T-cell (primary cell): ENCODE measurements at regions of chr16 and their contacts with region 1.

Region 1: GRCh38 chr16:75432828-75433731 is at the start of gene CFDP1:
- DNase-seq: peak; percentile 90 to 97 (median 94)
- ATAC-seq: peak; percentile 87 to 92 (median 90)
- H3K4me3 ChIP-seq: peak within 1 kb of the TSS; percentile 98 to 100
- H3K4me3 Mint-ChIP-seq: peak within 1 kb of the TSS; percentile 91 to 96 (median 95)
- H3K27ac ChIP-seq: peak within 1 kb of the TSS; percentile 97
- H3K27ac Mint-ChIP-seq: peak within 1 kb of the TSS; percentile 91 to 93
- H3K4me1 ChIP-seq: peaks cover 10 to 24% of the 10 kb centered on the region in 2 experiments
- H3K4me1 Mint-ChIP-seq: peaks cover 43 to 48% (median 47%) of the 10 kb centered on the region in 3 donors
- H3K27me3 ChIP-seq: no peaks in the 10 kb centered on the region
- H3K27me3 Mint-ChIP-seq: no peaks in the 10 kb centered on the region
- total RNA-seq, gene CFDP1: 30.8 to 36.5 (median 34.2) TPM

Region 2: DNA sequence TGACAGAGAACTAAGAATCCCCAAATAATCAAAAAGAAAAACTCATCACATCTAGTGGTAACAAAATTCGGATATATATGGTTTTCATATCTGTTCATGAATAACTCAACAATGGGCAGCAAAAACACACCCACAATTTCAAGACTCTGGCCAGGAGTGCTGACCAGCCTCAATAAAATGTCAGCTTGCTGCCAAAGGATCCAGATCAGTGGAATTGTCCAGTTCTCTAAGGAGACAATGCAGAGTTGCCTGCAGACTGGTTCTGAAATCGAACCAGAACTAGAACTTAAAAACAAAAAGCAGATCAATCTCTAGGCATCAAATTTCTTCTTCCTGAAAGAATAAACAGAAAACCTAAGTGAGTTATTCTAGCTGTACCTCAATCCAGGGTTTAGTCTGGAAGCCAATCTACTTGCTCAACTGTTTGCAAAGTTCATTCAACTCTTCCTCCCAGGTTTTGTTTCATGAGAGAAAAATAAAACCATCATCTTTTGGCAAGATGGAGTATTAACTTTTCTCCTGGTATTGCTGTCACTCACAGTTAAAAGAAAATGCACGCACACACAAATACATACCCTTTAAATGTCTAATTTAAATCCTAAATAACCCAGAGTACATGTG is 60.7 kb before region 1 on chr16:
- CTCF ChIA-PET with region 1: interaction called in 1 of 2 experiments, 16 read pairs
- POLR2A ChIA-PET with region 1: no interaction called
- DNase-seq: no peak
- ATAC-seq: no peak
- H3K4me3 ChIP-seq: no peak overlapping the region
- H3K4me3 Mint-ChIP-seq: no peak overlapping the region
- H3K27ac ChIP-seq: no peak overlapping the region
- H3K27ac Mint-ChIP-seq: no peak overlapping the region
- H3K4me1 ChIP-seq: no peaks in the 10 kb centered on the region
- H3K4me1 Mint-ChIP-seq: peaks cover 0 to 4% (median under 1%) of the 10 kb centered on the region in 3 donors
- H3K27me3 ChIP-seq: no peaks in the 10 kb centered on the region
- H3K27me3 Mint-ChIP-seq: no peaks in the 10 kb centered on the region

Region 3: DNA sequence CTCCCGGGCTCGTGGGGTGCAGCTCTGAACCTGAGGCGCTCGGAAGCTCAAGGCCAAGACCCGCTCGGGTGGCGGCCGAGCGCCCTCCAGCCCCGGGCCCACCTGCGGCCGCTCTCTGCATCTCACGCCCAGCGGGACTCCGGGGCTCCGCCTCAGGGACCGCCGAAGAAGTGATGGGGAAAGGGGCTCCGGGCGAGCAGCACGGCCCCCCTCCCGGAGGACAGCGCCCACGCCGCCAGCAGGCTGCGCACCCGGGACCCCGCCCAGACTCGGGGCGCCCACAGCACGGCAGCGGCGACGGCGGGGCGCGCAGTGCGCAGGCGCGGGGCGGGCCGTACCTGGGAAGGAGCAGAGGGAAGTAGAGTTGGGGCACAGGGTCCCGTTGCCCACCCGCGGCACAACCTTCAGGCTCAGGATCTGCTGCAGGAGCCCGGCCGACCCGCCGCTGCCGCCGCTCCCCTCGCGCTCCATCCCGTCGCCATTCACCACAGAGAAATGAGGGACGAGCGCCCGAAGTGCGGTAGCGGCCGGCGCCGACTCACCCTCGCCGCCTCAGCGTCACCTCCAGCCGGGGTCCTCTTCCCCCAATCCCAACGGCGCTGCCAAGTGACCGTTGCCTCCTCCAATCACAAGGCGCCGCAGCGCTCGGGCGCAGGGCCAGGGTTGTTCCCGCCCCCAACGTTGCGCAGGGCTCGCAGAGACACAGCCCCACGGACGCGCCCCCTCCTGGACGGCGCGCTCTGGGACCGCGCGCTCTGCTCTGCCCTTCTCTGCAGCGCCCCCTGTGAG is 31.2 kb after region 1 on chr16 and contains the start of gene TMEM170A:
- CTCF ChIA-PET with region 1: interaction called, 8 to 30 read pairs
- POLR2A ChIA-PET with region 1: interaction called, 3 to 5 read pairs
- DNase-seq: peak; percentile 93 to 100 (median 97)
- ATAC-seq: peak; percentile 89 to 92 (median 92)
- H3K4me3 ChIP-seq: peak within 1 kb of the TSS; percentile 91 to 97
- H3K4me3 Mint-ChIP-seq: peak within 1 kb of the TSS; percentile 82 to 93 (median 85)
- H3K27ac ChIP-seq: peak within 1 kb of the TSS; percentile 98
- H3K27ac Mint-ChIP-seq: peak within 1 kb of the TSS; percentile 91 to 95
- H3K4me1 ChIP-seq: peaks cover 9 to 32% of the 10 kb centered on the region in 2 experiments
- H3K4me1 Mint-ChIP-seq: peaks cover 44 to 50% (median 46%) of the 10 kb centered on the region in 3 donors
- H3K27me3 ChIP-seq: peaks cover 0 to 3% of the 10 kb centered on the region in 2 experiments
- H3K27me3 Mint-ChIP-seq: no peaks in the 10 kb centered on the region
- total RNA-seq, gene TMEM170A: 37.7 to 45.8 (median 41.9) TPM

Region 4: DNA sequence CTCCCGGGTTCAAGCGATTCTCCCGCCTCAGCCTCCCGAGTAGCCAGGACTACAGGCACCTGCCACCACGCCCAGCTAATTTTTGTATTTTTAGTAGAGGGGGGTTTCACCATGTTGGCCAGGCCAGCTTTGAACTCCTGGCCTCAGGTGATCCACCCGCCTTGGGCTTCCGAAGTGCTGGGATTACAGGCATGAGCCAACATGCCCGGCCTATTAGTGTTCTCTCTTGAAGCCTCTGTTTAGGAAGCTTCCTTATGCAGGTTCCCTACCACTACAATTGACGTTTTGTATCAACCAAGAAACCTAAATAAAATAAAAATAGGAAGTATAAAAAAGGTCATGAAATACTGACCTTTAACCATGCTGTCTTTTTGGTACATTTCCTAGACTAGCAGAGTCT is 86.8 kb after region 1 on chr16:
- CTCF ChIA-PET with region 1: interaction called in 1 of 2 experiments, 18 read pairs
- POLR2A ChIA-PET with region 1: interaction called in 1 of 2 experiments, 14 read pairs
- DNase-seq: no peak
- ATAC-seq: no peak
- H3K4me3 ChIP-seq: no peak overlapping the region
- H3K4me3 Mint-ChIP-seq: no peak overlapping the region
- H3K27ac ChIP-seq: no peak overlapping the region
- H3K27ac Mint-ChIP-seq: no peak overlapping the region
- H3K4me1 ChIP-seq: peaks cover 0 to 14% of the 10 kb centered on the region in 2 experiments
- H3K4me1 Mint-ChIP-seq: peaks cover 11 to 13% (median 12%) of the 10 kb centered on the region in 3 donors
- H3K27me3 ChIP-seq: no peaks in the 10 kb centered on the region
- H3K27me3 Mint-ChIP-seq: no peaks in the 10 kb centered on the region

Region 5: DNA sequence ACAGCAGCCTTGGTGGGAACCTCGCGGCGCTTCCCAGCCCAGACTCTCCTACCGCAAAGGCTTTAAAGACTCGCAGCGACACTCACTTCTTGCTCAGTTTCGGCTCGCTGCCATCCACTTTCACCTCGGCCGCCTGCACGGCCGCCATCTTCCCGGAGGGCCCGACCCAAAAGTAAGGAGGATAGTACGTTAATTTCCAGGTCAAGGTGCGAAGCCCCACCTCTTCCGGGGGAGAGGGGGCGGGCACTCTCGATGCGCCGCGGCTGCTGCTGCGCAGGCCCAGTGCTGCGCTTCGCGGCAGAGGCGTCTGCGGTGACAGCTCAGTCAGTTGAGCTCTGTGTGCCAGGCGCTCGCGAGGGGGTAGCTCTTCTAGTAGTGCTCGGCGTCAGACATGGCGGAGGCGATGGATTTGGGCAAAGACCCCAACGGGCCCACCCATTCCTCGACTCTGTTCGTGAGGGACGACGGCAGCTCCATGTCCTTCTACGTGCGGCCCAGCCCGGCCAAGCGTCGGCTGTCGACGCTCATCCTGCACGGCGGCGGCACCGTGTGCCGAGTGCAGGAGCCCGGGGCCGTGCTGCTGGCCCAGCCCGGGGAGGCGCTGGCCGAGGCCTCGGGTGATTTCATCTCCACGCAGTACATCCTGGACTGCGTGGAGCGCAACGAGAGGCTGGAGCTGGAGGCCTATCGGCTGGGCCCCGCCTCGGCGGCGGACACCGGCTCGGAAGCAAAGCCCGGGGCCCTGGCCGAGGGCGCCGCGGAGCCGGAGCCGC is 214.6 kb after region 1 on chr16 and contains the starts of genes KARS1 and TERF2IP:
- CTCF ChIA-PET with region 1: interaction called in 1 of 2 experiments, 5 read pairs
- POLR2A ChIA-PET with region 1: interaction called in 1 of 2 experiments, 11 read pairs
- DNase-seq: peak; percentile 83 to 98 (median 94)
- ATAC-seq: peak; percentile 86 to 88 (median 87)
- H3K4me3 ChIP-seq: peak within 1 kb of the TSS; percentile 89 to 100
- H3K4me3 Mint-ChIP-seq: peak within 1 kb of the TSS; percentile 99 to 100 (median 99)
- H3K27ac ChIP-seq: peak within 1 kb of the TSS; percentile 94
- H3K27ac Mint-ChIP-seq: peak within 1 kb of the TSS; percentile 99
- H3K4me1 ChIP-seq: peaks cover 37 to 54% of the 10 kb centered on the region in 2 experiments
- H3K4me1 Mint-ChIP-seq: peaks cover 66 to 74% (median 69%) of the 10 kb centered on the region in 3 donors
- H3K27me3 ChIP-seq: no peaks in the 10 kb centered on the region
- H3K27me3 Mint-ChIP-seq: no peaks in the 10 kb centered on the region
- total RNA-seq, gene KARS1: 121 to 151 (median 128) TPM
- total RNA-seq, gene TERF2IP: 86.0 to 104 (median 94.0) TPM